ENCODE measurements at regions of chr10 and their contacts with region 1.

Region 1: DNA sequence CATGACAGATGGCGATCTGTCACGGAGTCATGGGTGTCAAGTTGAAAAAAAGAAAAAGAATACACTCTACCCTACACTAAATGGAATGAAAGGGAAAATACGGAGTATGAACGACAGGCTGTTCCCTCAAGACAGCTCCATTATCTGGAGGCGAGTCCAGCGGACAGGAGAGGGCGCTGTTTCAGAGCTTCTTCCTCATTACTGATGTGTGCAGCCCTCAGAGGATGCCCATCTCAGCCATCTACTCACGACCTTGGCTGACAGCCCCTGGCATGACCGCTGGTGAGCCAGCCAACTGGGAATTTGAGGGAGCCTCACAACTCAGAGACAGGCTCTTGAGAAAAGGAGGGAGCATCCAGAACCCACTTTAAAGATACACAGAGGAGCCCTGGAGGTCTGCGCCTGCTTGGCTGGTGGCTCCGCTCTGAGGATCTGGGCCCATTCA is 49.6 kb upstream of the SMNDC1 start:
- DNase-seq: peak; percentile 88
- ATAC-seq: peak; percentile 83
- H3K4me3 Mint-ChIP-seq: peak overlapping the region; percentile 38
- H3K27ac Mint-ChIP-seq: no peak overlapping the region
- H3K4me1 Mint-ChIP-seq: peaks cover 53% of the 10 kb centered on the region
- H3K27me3 Mint-ChIP-seq: no peaks in the 10 kb centered on the region
- CTCF ChIP-seq: peak; percentile 65

Region 2: DNA sequence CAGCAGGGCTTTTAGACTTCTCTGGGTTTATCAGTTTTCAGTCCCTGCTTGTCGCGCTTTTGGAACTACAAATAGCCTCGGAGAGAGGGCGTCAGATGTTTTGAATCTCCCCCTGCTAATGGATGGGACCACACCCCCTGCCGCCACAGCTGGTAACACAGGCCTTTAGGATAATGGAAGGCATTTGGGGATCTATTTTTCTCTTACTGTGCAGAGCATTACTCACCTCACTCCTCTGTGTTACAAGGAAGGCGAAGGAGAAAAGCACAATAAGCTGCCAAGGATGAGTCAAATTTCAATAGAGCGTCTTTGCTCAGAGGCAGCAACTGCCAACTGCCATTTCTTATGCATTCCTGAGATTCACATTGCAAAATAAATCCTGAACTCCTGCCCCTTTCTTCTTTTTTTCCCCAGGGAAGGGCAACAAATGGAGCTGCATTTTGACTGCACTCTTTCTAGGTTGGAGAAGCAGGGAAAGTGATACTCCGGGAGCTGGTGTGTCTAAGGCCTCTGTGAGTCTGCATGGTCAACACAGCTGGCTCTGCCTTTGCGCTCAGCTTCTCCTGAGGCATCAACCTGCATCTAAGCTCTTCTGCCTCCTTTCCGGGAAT is 18.1 kb before region 1 on chr10:
- CTCF ChIA-PET with region 1: interaction called, 32 read pairs
- POLR2A ChIA-PET with region 1: no interaction called
- DNase-seq: peak; percentile 38
- ATAC-seq: peak; percentile 87
- H3K4me3 Mint-ChIP-seq: no peak overlapping the region
- H3K27ac Mint-ChIP-seq: no peak overlapping the region
- H3K4me1 Mint-ChIP-seq: peaks cover 19% of the 10 kb centered on the region
- H3K27me3 Mint-ChIP-seq: no peaks in the 10 kb centered on the region
- CTCF ChIP-seq: no peak

Region 3: DNA sequence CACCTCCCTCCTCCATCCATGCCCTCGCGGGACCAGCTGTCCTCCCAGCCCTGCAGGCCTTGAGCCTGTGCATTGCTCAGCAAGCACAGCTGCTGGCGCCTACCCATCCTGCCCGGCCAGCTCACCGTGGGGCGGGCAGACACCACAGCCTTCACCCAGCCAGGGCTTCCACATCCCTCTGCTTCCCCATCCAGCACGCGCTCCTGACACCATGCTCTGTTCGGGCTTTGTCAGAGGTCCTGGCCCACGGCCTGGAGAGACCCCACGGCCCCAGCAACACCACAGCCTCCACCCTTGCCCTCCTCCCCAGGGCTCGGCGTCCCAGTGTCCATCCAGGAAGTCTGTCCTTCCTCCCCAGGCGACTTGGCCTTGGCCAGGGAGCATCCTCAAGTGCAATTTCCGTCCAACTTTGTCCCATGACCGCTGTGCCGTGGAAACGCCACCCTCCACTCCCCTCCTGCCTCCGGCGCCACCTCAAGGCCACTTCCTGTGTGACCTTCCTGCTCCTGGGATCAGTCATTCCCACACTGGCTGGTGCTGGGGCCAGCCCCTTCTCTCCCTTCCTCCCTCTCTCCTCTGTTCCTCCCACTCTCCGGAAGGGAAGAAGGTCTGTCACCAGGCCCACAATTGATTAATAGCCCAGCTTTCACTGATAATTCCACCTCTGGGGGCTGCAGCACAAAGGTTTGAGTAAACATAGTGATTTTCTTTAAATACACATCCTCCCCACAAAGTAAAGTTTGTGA is 21.9 kb after region 1 on chr10:
- CTCF ChIA-PET with region 1: interaction called, 11 read pairs
- POLR2A ChIA-PET with region 1: no interaction called
- DNase-seq: no peak
- ATAC-seq: peak; percentile 69
- H3K4me3 Mint-ChIP-seq: no peak overlapping the region
- H3K27ac Mint-ChIP-seq: no peak overlapping the region
- H3K4me1 Mint-ChIP-seq: peaks cover 10% of the 10 kb centered on the region
- H3K27me3 Mint-ChIP-seq: no peaks in the 10 kb centered on the region
- CTCF ChIP-seq: no peak

Region 4: DNA sequence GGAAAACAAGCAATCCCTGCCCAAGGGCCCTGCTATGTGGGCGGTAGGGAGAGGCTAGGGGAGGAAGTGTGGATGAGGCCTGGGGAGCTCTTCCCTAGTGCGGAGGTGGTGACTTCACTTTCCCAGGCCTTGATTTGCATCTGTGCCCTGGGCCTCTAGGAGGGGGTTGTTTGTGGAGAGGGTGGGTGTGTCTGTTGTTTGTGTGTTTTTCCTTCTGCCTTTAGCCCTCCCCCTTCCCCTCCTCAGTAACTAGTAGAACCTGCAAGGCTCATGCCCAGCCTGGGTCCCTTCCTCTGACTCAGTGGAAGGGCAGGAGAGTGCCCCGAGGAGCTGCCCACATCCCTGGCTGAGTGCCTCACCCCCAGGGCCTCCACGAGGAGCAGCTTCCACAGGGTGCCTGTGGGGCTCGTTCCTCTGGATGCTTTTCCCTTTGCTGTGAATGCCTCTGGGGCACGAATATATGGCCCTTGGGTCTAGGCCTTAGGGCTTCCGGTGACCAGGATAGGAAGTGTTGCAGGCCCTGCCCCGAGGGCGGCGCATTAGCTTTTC is 53.9 kb after region 1 on chr10:
- CTCF ChIA-PET with region 1: interaction called, 11 read pairs
- POLR2A ChIA-PET with region 1: no interaction called
- DNase-seq: peak; percentile 26
- ATAC-seq: peak; percentile 90
- H3K4me3 Mint-ChIP-seq: no peak overlapping the region
- H3K27ac Mint-ChIP-seq: no peak overlapping the region
- H3K4me1 Mint-ChIP-seq: peaks cover 22% of the 10 kb centered on the region
- H3K27me3 Mint-ChIP-seq: 0 out of 2 replicates have a peak, but pooled peaks cover 2% of the 10 kb centered on the region
- CTCF ChIP-seq: no peak

Region 5: GRCh38 chr10:110498087-110498981 is 144.0 kb after region 1 on chr10:
- CTCF ChIA-PET with region 1: interaction called, 51 read pairs
- POLR2A ChIA-PET with region 1: interaction called, 3 read pairs
- DNase-seq: peak; percentile 51
- ATAC-seq: no peak; the same call in 1 of the 2 replicates
- H3K4me3 Mint-ChIP-seq: peak overlapping the region; percentile 89
- H3K27ac Mint-ChIP-seq: peak overlapping the region; percentile 54; the same call in 1 of the 2 replicates
- H3K4me1 Mint-ChIP-seq: peaks cover 75% of the 10 kb centered on the region
- H3K27me3 Mint-ChIP-seq: peaks cover 14% of the 10 kb centered on the region
- CTCF ChIP-seq: no peak

Measured in WTC11 (cell line).